ENCODE measurements at regions of chr3 and their contacts with region 1.

Region 1: GRCh38 chr3:45688882-45689756 is at the start of gene SACM1L:
- DNase-seq: peak; percentile 84 to 97 (median 95)
- ATAC-seq: peak; percentile 90
- H3K4me3 ChIP-seq: peak within 1 kb of the TSS; percentile 80
- H3K4me3 Mint-ChIP-seq: peak within 1 kb of the TSS; percentile 87 to 98 (median 95)
- H3K27ac ChIP-seq: peak within 1 kb of the TSS; percentile 96
- H3K27ac Mint-ChIP-seq: peak within 1 kb of the TSS; percentile 96 to 100 (median 99)
- H3K4me1 ChIP-seq: peaks cover 38 to 39% of the 10 kb centered on the region in 2 donors
- H3K4me1 Mint-ChIP-seq: peaks cover 40 to 74% (median 67%) of the 10 kb centered on the region in 7 donors
- H3K27me3 ChIP-seq: no peaks in the 10 kb centered on the region
- H3K27me3 Mint-ChIP-seq: peaks cover 0 to 5% (median 0%) of the 10 kb centered on the region in 5 donors
- total RNA-seq, gene SACM1L: 60.8 to 93.8 (median 70.5) TPM

Region 2: DNA sequence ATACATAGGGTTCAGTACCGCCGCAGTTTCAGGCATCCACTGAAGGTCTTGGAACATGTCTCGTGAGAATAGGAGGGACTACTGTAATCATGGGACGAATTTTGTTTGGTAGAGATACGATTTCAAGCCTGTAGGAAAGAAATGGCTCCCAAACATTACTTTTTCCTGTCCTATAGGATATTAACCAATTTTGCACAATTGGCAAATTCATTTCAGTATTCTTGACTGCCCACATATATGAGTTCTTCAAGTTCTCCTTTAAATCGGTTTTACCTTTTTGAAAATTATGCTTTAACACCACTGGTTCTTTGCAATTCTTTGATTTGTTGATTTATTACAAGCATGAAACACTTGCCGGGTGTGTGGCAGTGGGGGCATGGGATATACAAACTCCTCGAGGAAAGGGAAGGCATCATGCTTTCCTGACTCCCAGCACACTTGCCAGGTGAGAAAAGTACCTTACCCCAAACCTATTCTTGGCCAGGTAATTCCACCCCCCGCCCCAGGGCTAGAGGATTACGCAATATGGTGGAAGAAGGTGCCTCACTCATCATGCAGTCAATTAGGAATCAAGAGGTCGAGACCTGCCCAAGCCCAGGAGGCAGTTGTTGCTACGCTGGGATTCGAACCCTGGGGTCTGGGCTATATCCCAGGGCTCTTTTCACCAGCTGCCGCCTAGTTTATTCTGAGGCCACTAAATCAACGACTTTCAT is 301.3 kb before region 1 on chr3:
- CTCF ChIA-PET with region 1: no interaction called
- POLR2A ChIA-PET with region 1: interaction called, 3 read pairs
- intact Hi-C with region 1: loop called (anchors 1 kb)
- DNase-seq: no peak
- ATAC-seq: no peak
- H3K4me3 ChIP-seq: peak overlapping the region; percentile 95
- H3K4me3 Mint-ChIP-seq: peak overlapping the region; percentile 94 to 99 (median 97)
- H3K27ac ChIP-seq: peak overlapping the region; percentile 77
- H3K27ac Mint-ChIP-seq: peak overlapping the region; percentile 38 to 97 (median 91)
- H3K4me1 ChIP-seq: peaks cover 4 to 8% of the 10 kb centered on the region in 2 donors
- H3K4me1 Mint-ChIP-seq: peaks cover 6 to 27% (median 18%) of the 10 kb centered on the region in 7 donors
- H3K27me3 ChIP-seq: no peaks in the 10 kb centered on the region
- H3K27me3 Mint-ChIP-seq: peaks cover 0 to 35% (median 4%) of the 10 kb centered on the region in 5 donors

Region 3: GRCh38 chr3:45464336-45465170 is 224.6 kb before region 1 on chr3:
- CTCF ChIA-PET with region 1: no interaction called
- POLR2A ChIA-PET with region 1: no interaction called
- intact Hi-C with region 1: no loop called
- DNase-seq: peak in 7 of 9 donors; percentile 44 to 73 (median 59)
- ATAC-seq: peak; percentile 92
- H3K4me3 ChIP-seq: no peak overlapping the region
- H3K4me3 Mint-ChIP-seq: peak overlapping the region in 7 of 10 donors; percentile 8 to 66 (median 35)
- H3K27ac ChIP-seq: peak overlapping the region; percentile 18
- H3K27ac Mint-ChIP-seq: peak overlapping the region; percentile 9 to 93 (median 79)
- H3K4me1 ChIP-seq: peaks cover 0 to 26% of the 10 kb centered on the region in 2 donors
- H3K4me1 Mint-ChIP-seq: peaks cover 10 to 43% (median 40%) of the 10 kb centered on the region in 7 donors
- H3K27me3 ChIP-seq: no peaks in the 10 kb centered on the region
- H3K27me3 Mint-ChIP-seq: no peaks in the 10 kb centered on the region

Region 4: DNA sequence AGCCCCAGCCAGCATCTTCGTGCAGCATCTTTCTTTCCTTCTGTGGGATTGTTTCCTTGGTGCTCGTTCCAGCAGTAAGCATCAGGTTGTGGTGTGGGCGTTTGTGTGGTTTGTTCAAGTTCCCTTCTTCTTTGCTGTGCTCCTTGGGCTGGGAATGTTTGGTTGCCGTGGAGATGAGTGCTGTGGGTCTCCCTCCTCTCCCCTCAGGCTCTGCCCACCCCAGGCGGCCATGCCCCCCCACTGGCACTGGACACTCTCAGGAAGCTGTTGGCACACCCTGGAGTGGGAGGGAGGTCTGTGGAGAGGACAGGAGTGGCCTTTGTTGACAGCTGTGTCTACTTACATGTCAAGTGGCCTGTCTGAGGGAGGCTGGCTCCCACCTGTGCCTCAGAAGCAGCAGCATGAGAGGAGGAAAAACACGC is 46.4 kb before region 1 on chr3:
- CTCF ChIA-PET with region 1: no interaction called
- POLR2A ChIA-PET with region 1: no interaction called
- intact Hi-C with region 1: no loop called
- DNase-seq: no peak
- ATAC-seq: no peak
- H3K4me3 ChIP-seq: no peak overlapping the region
- H3K4me3 Mint-ChIP-seq: no peak overlapping the region
- H3K27ac ChIP-seq: no peak overlapping the region
- H3K27ac Mint-ChIP-seq: no peak overlapping the region
- H3K4me1 ChIP-seq: no peaks in the 10 kb centered on the region
- H3K4me1 Mint-ChIP-seq: peaks cover 0 to 17% (median 8%) of the 10 kb centered on the region in 7 donors
- H3K27me3 ChIP-seq: no peaks in the 10 kb centered on the region
- H3K27me3 Mint-ChIP-seq: no peaks in the 10 kb centered on the region

Region 5: DNA sequence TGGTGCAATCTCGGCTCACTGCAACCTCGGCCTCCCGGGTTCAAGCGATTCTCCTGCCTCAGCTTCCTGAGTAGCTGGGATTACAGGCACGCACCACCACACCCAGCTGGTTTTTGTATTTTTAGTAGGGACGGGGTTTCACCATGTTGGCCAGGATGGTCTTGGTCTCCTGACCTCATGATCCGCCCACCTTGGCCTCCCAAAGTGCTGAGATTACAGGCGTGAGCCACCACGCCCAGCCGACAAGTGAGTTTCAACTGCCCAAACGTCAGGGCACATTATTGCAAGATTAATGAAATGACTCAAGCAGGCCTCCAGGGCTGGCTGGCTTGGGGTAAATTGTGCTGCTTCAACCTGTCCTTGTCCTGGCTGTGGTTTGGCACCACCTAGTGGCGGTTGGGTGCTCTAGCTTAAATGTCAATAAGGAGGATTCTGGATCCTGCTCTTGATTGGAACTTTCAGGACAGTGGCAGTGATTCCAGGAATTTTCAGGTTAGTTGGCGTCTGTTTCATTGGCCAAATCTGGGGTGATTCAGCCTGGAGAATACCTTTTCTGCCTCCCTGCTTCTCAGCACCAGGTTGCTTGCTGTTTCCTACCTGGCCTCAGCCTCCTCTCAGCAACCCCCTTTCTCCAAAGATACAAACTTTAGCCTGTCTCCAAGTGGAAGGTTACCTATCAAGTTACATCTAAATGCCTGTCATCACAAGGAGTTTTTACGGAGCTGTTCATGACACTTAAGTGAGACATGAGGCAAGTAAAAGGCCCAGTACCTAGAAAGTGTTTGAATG is 32.4 kb before region 1 on chr3:
- CTCF ChIA-PET with region 1: interaction called, 22 read pairs
- POLR2A ChIA-PET with region 1: interaction called, 4 read pairs
- intact Hi-C with region 1: no loop called
- DNase-seq: peak; percentile 65 to 83 (median 78)
- ATAC-seq: peak; percentile 94
- H3K4me3 ChIP-seq: no peak overlapping the region
- H3K4me3 Mint-ChIP-seq: no peak overlapping the region
- H3K27ac ChIP-seq: no peak overlapping the region
- H3K27ac Mint-ChIP-seq: peak overlapping the region in 1 of 9 donors; percentile 30
- H3K4me1 ChIP-seq: no peaks in the 10 kb centered on the region
- H3K4me1 Mint-ChIP-seq: peaks cover 6 to 27% (median 18%) of the 10 kb centered on the region in 7 donors
- H3K27me3 ChIP-seq: no peaks in the 10 kb centered on the region
- H3K27me3 Mint-ChIP-seq: no peaks in the 10 kb centered on the region

Region 6: DNA sequence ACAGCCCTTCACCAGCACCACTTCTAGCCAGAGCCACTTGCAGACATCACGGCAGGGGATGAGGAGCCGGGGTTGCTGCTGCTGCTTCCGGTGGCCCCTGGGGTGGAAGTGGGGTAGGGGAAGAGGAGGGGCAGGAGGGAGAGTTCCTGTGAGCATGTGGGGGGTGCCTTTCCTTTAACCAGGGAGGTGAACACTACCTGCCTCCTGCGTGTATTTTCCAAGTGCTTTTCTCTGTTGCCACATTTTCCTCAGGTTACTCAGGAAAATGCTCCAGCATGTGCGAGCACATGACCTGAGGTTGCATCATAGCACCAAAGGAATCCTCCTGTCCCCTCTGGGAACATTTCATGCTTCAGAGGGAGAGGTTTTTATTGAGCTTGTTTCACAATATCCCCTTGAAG is 12.1 kb before region 1 on chr3:
- CTCF ChIA-PET with region 1: interaction called, 4 read pairs
- POLR2A ChIA-PET with region 1: interaction called, 23 read pairs
- intact Hi-C with region 1: loop called (anchors 1 kb)
- DNase-seq: peak in 8 of 9 donors; percentile 37 to 79 (median 77)
- ATAC-seq: peak; percentile 92
- H3K4me3 ChIP-seq: peak overlapping the region; percentile 55
- H3K4me3 Mint-ChIP-seq: peak overlapping the region; percentile 70 to 88 (median 82)
- H3K27ac ChIP-seq: peak overlapping the region; percentile 74
- H3K27ac Mint-ChIP-seq: peak overlapping the region; percentile 92 to 98 (median 96)
- H3K4me1 ChIP-seq: peaks cover 11 to 21% of the 10 kb centered on the region in 2 donors
- H3K4me1 Mint-ChIP-seq: peaks cover 16 to 53% (median 43%) of the 10 kb centered on the region in 7 donors
- H3K27me3 ChIP-seq: no peaks in the 10 kb centered on the region
- H3K27me3 Mint-ChIP-seq: no peaks in the 10 kb centered on the region

Region 7: DNA sequence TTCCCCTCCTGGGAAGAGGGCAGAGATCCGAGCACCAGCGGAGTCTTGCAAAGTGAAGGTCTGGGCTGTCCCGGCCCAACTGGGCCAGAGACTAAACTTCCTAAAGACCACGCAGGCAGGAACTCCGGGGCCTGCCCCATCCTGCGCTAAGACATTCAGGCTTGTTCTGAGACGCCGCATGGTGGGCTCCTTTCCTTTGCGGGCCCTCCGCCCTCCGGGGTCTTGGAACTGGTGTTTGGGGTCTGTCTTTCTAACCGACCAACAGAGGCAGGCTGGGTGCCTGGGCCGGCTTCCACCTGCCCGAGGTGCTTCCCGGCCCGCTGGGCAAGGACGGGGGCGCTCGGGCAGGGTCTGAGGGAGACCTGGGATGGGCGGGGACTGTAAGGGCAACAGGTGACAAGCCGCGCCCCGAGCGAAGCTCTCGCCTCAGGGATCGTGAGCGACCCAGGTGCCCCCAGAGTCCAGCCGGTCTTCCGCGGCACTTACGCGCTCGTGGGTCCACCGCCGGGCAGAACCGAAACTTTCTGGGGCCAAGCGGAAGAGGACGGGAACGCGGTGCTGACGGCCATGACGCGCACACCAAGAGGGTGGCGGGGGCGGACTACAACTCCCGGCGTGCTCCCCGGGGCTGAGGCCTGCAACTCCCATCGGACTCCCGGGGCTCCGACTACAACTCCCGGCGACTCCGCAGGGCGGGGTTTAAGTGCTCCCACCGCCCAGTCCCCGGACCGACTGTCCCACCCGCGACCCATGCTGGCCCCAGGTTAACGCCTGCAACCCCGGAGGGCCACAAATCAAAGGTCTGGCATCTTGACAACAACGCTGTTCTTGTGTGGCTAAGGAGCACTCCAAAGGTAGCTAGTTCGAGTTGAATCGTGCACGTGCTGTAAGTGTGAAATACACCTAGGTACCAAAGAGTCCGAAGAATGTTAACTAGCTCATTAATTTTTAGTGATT is 306.4 kb after region 1 on chr3 and contains the start of gene FYCO1:
- CTCF ChIA-PET with region 1: no interaction called
- POLR2A ChIA-PET with region 1: no interaction called
- intact Hi-C with region 1: loop called (anchors 1 to 2 kb)
- DNase-seq: peak; percentile 75 to 87 (median 86)
- ATAC-seq: peak; percentile 96
- H3K4me3 ChIP-seq: peak within 1 kb of the TSS; percentile 85
- H3K4me3 Mint-ChIP-seq: peak within 1 kb of the TSS; percentile 83 to 93 (median 90)
- H3K27ac ChIP-seq: peak within 1 kb of the TSS; percentile 84
- H3K27ac Mint-ChIP-seq: peak within 1 kb of the TSS; percentile 78 to 96 (median 92)
- H3K4me1 ChIP-seq: peaks cover 22 to 48% of the 10 kb centered on the region in 2 donors
- H3K4me1 Mint-ChIP-seq: peaks cover 10 to 49% (median 37%) of the 10 kb centered on the region in 7 donors
- H3K27me3 ChIP-seq: no peaks in the 10 kb centered on the region
- H3K27me3 Mint-ChIP-seq: peaks cover 3 to 11% (median 8%) of the 10 kb centered on the region in 5 donors
- total RNA-seq, gene FYCO1: 20.0 to 27.5 (median 22.9) TPM

Region 8: GRCh38 chr3:47164007-47164881 is 1475.1 kb after region 1 on chr3 and contains the start of gene SETD2:
- CTCF ChIA-PET with region 1: no interaction called
- POLR2A ChIA-PET with region 1: no interaction called
- intact Hi-C with region 1: loop called in 1 of 2 experiments (anchors 10 kb)
- DNase-seq: peak; percentile 67 to 86 (median 82)
- ATAC-seq: peak; percentile 92
- H3K4me3 ChIP-seq: peak within 1 kb of the TSS; percentile 77
- H3K4me3 Mint-ChIP-seq: peak within 1 kb of the TSS; percentile 90 to 99 (median 98)
- H3K27ac ChIP-seq: peak within 1 kb of the TSS; percentile 96
- H3K27ac Mint-ChIP-seq: peak within 1 kb of the TSS; percentile 94 to 99 (median 99)
- H3K4me1 ChIP-seq: peaks cover 30 to 36% of the 10 kb centered on the region in 2 donors
- H3K4me1 Mint-ChIP-seq: peaks cover 34 to 68% (median 56%) of the 10 kb centered on the region in 7 donors
- H3K27me3 ChIP-seq: no peaks in the 10 kb centered on the region
- H3K27me3 Mint-ChIP-seq: no peaks in the 10 kb centered on the region
- total RNA-seq, gene SETD2: 49.2 to 77.3 (median 71.1) TPM

Measured in naive thymus-derived CD4-positive, alpha-beta T cell (primary cell).